K562 (cell line): ENCODE measurements at regions of chr1 and their contacts with region 1.

Region 1: DNA sequence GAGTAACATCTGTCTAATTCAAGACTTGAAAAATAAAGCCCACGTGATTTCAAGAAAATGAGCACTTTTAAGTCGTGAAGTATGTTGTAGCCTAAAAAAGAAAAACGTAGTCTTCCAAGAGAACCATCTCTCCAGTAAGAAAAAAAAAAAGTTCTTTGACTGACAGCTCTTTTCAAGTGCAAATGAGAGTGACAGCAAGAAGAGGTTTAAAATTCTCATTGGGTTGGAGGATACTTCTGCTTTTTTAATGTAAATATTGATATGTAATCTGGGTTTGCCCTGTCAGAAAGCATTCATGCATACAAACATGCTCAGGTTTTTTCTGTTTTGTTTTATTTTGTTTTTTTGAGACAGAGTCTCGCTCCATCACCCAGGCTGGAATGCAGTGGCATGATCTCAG is 32.3 kb upstream of the PRDM2 start:
- DNase-seq: no peak
- ATAC-seq: no peak
- H3K4me3 ChIP-seq: no peak overlapping the region
- H3K27ac ChIP-seq: no peak overlapping the region
- H3K4me1 ChIP-seq: no peaks in the 10 kb centered on the region
- H3K27me3 ChIP-seq: peaks cover 9 to 30% of the 10 kb centered on the region in 2 experiments; a peak in 3 of 5 replicates
- CTCF ChIP-seq: no peak
- EP300 ChIP-seq: no peak
- POLR2A ChIP-seq: no peak
- RAD21 ChIP-seq: no peak

Region 2: DNA sequence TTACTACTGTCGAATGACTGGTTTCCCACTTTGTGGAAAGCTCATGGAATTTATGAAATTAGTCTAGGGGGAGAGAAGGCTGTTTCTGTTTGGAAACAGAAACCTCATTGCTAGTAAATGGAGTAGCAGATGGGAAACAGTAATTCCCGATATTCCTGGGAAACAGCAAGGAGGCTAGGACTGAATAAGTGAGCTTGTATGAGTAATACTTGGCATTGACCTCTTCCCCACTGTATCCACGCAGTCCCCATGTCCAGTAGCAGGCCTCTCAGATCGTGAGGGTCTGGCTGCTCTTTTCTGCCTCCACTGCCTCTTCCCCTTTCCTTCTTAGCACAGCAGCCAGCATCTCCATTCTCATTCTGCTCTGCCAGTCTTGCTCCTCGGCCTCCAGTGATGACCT is 107.8 kb after region 1 on chr1:
- CTCF ChIA-PET with region 1: no interaction called
- POLR2A ChIA-PET with region 1: no interaction called
- in situ Hi-C with region 1: no loop called
- intact Hi-C with region 1: no loop called
- DNase-seq: no peak
- ATAC-seq: no peak
- H3K4me3 ChIP-seq: no peak overlapping the region
- H3K27ac ChIP-seq: no peak overlapping the region
- H3K4me1 ChIP-seq: no peaks in the 10 kb centered on the region
- H3K27me3 ChIP-seq: no peaks in the 10 kb centered on the region
- CTCF ChIP-seq: no peak
- EP300 ChIP-seq: no peak
- POLR2A ChIP-seq: no peak
- RAD21 ChIP-seq: no peak

Region 3: GRCh38 chr1:13828454-13829151 is 160.9 kb after region 1 on chr1:
- CTCF ChIA-PET with region 1: no interaction called
- POLR2A ChIA-PET with region 1: no interaction called
- in situ Hi-C with region 1: no loop called
- intact Hi-C with region 1: loop called (anchors 5 kb)
- DNase-seq: peak; percentile 64 to 82 (median 78)
- ATAC-seq: peak; percentile 97
- H3K4me3 ChIP-seq: no peak overlapping the region; the same call in 1 of the 2 replicates
- H3K27ac ChIP-seq: no peak overlapping the region
- H3K4me1 ChIP-seq: no peaks in the 10 kb centered on the region; a peak in 1 of 5 replicates
- H3K27me3 ChIP-seq: peaks cover 17 to 49% of the 10 kb centered on the region in 2 experiments
- CTCF ChIP-seq: peak; percentile 71 to 88 (median 80)
- EP300 ChIP-seq: no peak
- POLR2A ChIP-seq: no peak
- RAD21 ChIP-seq: peak; percentile 16 to 71; a peak in 2 of 4 replicates